Activated naive CD4-positive, alpha-beta T cell treated with anti-CD3 and anti-CD28 coated beads for 36 hours (primary cell): ENCODE measurements at regions of chr10 and their contacts with region 1.

Region 1: DNA sequence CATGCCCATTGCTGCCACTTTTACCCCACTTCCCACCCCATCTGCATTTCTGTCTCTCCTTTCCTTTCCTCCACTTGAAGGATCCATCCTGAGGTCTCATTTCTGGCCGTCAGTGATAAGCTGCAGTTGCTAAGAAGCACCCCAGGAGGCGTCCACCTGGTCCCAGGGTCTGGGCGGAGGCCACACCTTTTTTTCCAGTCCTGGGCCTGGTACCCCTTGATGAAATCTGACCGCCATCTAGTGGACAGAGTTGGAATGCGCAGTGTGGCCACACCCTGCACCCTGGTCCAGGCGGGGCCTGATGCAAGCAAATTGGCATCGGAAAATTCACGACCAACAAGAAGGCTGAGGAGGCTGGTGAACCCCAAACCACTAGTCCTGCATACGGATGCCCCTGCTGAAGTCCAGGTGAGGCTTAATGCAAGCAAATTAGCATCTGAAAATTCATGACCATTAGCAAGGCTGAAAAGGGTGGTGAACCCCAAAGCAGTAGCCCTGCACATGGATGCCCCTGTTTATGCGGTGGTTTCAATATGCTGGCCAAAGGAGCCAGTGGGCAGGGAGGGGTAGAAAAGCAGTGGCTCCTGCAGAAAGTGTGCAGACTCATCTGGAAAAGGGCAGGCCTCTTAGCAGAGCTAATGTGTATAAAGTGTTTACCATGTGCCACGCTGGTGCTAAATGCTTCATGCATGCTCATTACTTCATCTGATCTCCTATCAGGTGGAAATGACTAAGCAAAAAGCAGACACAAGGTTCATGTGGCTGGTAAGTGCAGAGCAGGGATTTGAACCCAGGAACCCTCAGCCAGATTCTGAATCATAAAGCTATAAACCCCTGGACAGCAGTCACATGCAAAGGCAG is 43.2 kb downstream of the GPAM start:
- DNase-seq: peak; percentile 87
- H3K4me3 Mint-ChIP-seq: no peak overlapping the region
- H3K27ac Mint-ChIP-seq: peak overlapping the region; percentile 61
- H3K4me1 Mint-ChIP-seq: no peaks in the 10 kb centered on the region
- H3K27me3 Mint-ChIP-seq: peaks cover 4% of the 10 kb centered on the region

Region 2: DNA sequence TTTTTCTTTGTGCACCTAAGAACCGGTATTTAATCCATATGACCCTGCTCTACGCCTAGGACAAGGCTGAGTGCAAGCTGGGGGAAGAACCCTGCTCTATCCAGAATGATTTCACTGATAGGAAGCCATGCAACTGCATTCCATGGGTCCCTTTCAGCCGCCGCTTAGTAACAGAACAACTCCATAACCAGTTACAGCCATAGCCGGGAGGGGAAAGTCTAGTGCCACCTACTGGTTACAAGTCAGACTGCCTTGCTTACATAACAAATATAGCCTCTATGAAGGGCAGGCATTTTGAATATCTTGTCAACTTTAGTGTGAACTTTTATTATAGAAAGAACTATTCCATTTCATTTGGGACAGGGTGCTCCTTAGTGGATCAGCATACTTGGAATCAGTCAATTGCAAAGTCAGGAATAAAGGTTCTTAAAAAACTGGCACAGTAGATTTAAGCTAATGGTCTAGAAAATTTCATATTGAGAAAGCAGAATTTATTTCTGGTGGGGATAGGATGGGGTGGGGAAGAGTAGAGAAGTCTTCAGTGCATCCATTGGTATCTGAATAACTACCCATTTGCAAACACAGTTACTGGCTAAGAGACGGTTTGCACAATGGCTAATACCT is 541.8 kb before region 1 on chr10:
- CTCF ChIA-PET with region 1: interaction called, 4 read pairs
- intact Hi-C with region 1: loop called (anchors 5 kb)
- DNase-seq: peak; percentile 70
- H3K4me3 Mint-ChIP-seq: no peak overlapping the region
- H3K27ac Mint-ChIP-seq: no peak overlapping the region
- H3K4me1 Mint-ChIP-seq: no peaks in the 10 kb centered on the region
- H3K27me3 Mint-ChIP-seq: no peaks in the 10 kb centered on the region

Region 3: GRCh38 chr10:111756217-111757061 is 383.9 kb before region 1 on chr10:
- CTCF ChIA-PET with region 1: interaction called, 8 read pairs
- intact Hi-C with region 1: loop called (anchors 1 kb)
- DNase-seq: peak; percentile 33
- H3K4me3 Mint-ChIP-seq: no peak overlapping the region
- H3K27ac Mint-ChIP-seq: no peak overlapping the region
- H3K4me1 Mint-ChIP-seq: no peaks in the 10 kb centered on the region
- H3K27me3 Mint-ChIP-seq: peaks cover 23% of the 10 kb centered on the region

Region 4: GRCh38 chr10:112115799-112116385 is 24.4 kb before region 1 on chr10:
- CTCF ChIA-PET with region 1: interaction called, 42 read pairs
- intact Hi-C with region 1: loop called (anchors 1 kb)
- DNase-seq: peak; percentile 66
- H3K4me3 Mint-ChIP-seq: no peak overlapping the region
- H3K27ac Mint-ChIP-seq: no peak overlapping the region
- H3K4me1 Mint-ChIP-seq: no peaks in the 10 kb centered on the region
- H3K27me3 Mint-ChIP-seq: no peaks in the 10 kb centered on the region

Region 5: DNA sequence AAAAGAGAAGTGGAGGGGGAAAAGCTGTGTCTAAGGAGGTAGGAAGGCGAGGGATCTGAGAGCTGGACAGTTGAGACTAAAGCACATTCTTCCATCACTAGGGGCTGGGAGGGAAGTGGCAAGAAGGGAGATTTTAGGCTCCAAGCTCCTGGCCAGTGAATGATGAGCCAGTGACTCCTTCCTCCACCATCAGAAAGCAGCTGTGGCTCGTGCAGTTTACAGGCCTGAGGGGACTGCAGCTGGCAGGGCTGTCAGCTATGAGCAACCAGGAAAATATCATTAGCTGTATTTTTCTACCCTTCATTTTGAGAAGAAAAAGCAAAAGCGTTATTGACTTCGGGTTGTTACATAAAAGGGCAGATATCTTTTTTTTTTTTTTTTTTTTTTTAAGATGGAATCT is 17.5 kb before region 1 on chr10:
- CTCF ChIA-PET with region 1: interaction called, 39 read pairs
- intact Hi-C with region 1: no loop called
- DNase-seq: no peak
- H3K4me3 Mint-ChIP-seq: no peak overlapping the region
- H3K27ac Mint-ChIP-seq: no peak overlapping the region
- H3K4me1 Mint-ChIP-seq: no peaks in the 10 kb centered on the region
- H3K27me3 Mint-ChIP-seq: no peaks in the 10 kb centered on the region

Region 6: DNA sequence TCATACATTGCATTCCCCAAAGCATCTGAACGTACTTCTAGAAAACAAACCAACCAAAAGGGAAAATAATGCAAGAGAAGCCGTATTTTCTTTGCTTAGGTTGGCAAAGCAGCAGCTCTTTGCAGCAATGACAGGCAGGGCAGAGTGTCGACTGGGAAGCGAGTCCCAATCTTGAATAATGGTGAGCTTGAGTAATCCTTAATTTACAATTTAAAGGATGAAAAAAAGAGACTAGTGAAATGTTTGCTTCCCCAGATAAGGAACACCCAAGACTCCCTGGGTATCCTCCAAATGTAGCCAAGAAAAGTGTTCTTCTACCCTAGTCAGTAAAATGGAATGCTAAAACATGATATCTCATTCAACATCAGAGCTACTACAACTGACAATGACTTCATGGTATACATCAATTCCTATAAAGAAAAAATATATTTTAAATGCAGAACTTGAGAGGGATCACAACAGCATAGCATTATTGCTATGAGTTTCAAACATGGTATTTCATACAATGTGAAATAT is 11.2 kb after region 1 on chr10:
- CTCF ChIA-PET with region 1: interaction called, 24 read pairs
- intact Hi-C with region 1: no loop called
- DNase-seq: no peak
- H3K4me3 Mint-ChIP-seq: no peak overlapping the region
- H3K27ac Mint-ChIP-seq: no peak overlapping the region
- H3K4me1 Mint-ChIP-seq: no peaks in the 10 kb centered on the region
- H3K27me3 Mint-ChIP-seq: no peaks in the 10 kb centered on the region

Region 7: GRCh38 chr10:112429147-112429546 is 288.8 kb after region 1 on chr10:
- CTCF ChIA-PET with region 1: no interaction called
- intact Hi-C with region 1: no loop called
- DNase-seq: no peak
- H3K4me3 Mint-ChIP-seq: no peak overlapping the region
- H3K27ac Mint-ChIP-seq: peak overlapping the region; percentile 2
- H3K4me1 Mint-ChIP-seq: no peaks in the 10 kb centered on the region
- H3K27me3 Mint-ChIP-seq: no peaks in the 10 kb centered on the region